ENCODE measurements at regions of chr1 and their contacts with region 1.

Region 1: DNA sequence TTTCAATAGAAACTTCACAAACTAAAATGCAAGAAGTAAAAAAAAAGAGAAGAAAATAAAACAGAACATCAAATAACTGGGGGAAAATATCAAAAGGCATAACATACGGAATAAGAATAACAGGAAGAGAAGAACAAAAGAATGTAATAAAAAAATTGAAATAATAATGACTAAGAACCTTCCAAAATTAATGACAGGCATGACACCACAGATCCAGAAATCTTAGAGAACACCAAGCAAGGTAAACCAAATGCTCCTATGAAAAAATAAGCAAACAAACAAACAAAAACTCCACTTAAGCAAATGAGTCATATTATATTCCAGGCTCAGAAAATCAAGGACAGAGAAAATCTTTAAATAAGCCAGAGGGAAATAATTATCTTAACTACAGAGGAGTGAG is 8.7 kb downstream of the OR10J1 start:
- DNase-seq: peak; percentile 65
- H3K4me3 ChIP-seq: no peak overlapping the region
- H3K27ac ChIP-seq: peak overlapping the region; percentile 71
- H3K4me1 ChIP-seq: peaks cover 17% of the 10 kb centered on the region
- H3K27me3 ChIP-seq: no peaks in the 10 kb centered on the region
- CTCF ChIP-seq: no peak
- POLR2A ChIP-seq: no peak

Region 2: GRCh38 chr1:159408862-159409400 is 39.2 kb before region 1 on chr1:
- CTCF ChIA-PET with region 1: interaction called, 3 read pairs
- POLR2A ChIA-PET with region 1: no interaction called
- dilution Hi-C with region 1: no loop called
- intact Hi-C with region 1: loop called (anchors 2 kb)
- DNase-seq: peak; percentile 98
- H3K4me3 ChIP-seq: peak overlapping the region in 1 of 3 experiments; percentile 39
- H3K27ac ChIP-seq: peak overlapping the region; percentile 90
- H3K4me1 ChIP-seq: peaks cover 10% of the 10 kb centered on the region
- H3K27me3 ChIP-seq: no peaks in the 10 kb centered on the region
- CTCF ChIP-seq: no peak
- POLR2A ChIP-seq: no peak

Region 3: GRCh38 chr1:159421821-159422220 is 26.4 kb before region 1 on chr1:
- CTCF ChIA-PET with region 1: no interaction called
- POLR2A ChIA-PET with region 1: no interaction called
- dilution Hi-C with region 1: no loop called
- intact Hi-C with region 1: no loop called
- DNase-seq: no peak
- H3K4me3 ChIP-seq: no peak overlapping the region
- H3K27ac ChIP-seq: no peak overlapping the region
- H3K4me1 ChIP-seq: no peaks in the 10 kb centered on the region
- H3K27me3 ChIP-seq: no peaks in the 10 kb centered on the region
- CTCF ChIP-seq: peak in 1 of 2 donors; percentile 22
- POLR2A ChIP-seq: no peak

Region 4: GRCh38 chr1:159465191-159465603 is 17.0 kb after region 1 on chr1:
- CTCF ChIA-PET with region 1: no interaction called
- POLR2A ChIA-PET with region 1: no interaction called
- dilution Hi-C with region 1: no loop called
- intact Hi-C with region 1: no loop called
- DNase-seq: no peak
- H3K4me3 ChIP-seq: no peak overlapping the region
- H3K27ac ChIP-seq: no peak overlapping the region
- H3K4me1 ChIP-seq: peaks cover 15% of the 10 kb centered on the region
- H3K27me3 ChIP-seq: no peaks in the 10 kb centered on the region
- CTCF ChIP-seq: no peak
- POLR2A ChIP-seq: no peak